ENCODE measurements at regions of chr1 and their contacts with region 1.

Region 1: DNA sequence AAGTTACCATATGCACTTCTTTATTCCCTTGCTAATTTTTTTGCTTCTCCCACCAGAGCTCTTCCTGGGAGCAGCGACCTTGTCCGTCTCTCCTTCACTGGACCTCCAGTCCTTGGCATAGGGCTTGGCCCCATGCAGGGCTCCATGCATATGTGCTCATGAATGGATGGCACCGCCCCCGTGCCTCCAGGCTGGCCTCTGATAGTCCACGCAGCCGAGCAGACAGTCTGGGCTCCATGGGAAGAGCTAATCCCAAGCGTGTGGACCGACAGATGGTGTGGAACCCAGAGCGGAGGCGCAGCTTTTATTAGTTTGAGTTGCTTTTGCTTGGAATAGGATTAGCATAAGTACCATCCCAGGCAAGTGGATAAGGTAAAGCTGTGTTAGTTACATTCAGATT is 41.8 kb downstream of the CDCP2 start:
- DNase-seq: no peak
- ATAC-seq: no peak

Region 2: GRCh38 chr1:52444463-52444862 is 1666.5 kb before region 1 on chr1:
- intact Hi-C with region 1: loop called (anchors 5 kb)
- DNase-seq: no peak
- ATAC-seq: no peak

Region 3: GRCh38 chr1:53889304-53890298 is 221.4 kb before region 1 on chr1 and contains the start of gene YIPF1:
- intact Hi-C with region 1: no loop called
- DNase-seq: peak; percentile 95
- ATAC-seq: peak; percentile 99
- total RNA-seq, gene YIPF1: 16.6 TPM